ENCODE measurements at regions of chr1 and their contacts with region 1.

Region 1: DNA sequence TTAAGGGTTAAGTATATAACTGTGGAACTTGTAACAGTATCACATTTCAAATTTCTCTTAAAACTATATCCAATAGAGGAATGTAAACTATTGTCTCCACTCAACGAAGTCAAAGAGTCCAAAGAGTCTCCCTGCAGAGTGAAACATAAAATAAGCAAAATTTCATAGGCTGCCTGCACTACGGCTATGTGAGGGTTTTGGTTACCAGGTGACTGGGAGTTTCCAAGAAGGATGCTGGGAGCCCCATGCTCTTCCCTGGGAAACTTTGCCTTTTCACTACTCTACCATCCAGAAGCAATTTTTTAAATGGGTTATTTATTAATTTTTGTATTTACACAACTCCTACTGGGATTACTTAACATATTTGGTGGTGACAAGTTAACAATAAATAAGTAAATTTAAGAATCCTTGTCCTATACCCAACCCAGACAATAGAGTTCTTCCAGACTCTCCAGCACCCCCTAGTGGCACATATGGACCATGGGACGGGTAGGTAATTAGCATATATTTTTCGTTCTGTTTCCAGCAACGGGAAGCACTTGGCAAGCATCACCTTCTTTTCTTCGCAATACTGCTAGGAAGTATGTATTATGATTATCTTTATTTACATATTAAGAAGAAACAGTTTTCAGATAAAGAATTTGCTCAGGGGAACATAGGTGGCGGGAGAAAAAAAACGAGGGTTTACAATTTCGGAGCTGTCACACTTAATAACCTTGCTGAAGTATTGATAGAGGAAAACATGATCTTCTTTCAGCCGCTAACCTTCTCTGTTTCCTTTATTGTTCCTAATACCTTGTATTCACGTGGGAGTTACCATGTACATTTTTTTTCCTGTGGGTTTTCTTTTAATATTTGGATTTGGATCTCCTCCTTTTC is 3.5 kb downstream of the FMO2 start:
- DNase-seq: peak; percentile 5
- ATAC-seq: peak; percentile 94
- H3K4me3 ChIP-seq: no peak overlapping the region
- H3K27ac ChIP-seq: no peak overlapping the region
- H3K4me1 ChIP-seq: no peaks in the 10 kb centered on the region
- H3K27me3 ChIP-seq: no peaks in the 10 kb centered on the region
- CTCF ChIP-seq: peak; percentile 68 to 87 (median 81)
- EP300 ChIP-seq: no peak
- POLR2A ChIP-seq: no peak
- RAD21 ChIP-seq: peak; percentile 68

Region 2: GRCh38 chr1:170967042-170967910 is 221.4 kb before region 1 on chr1:
- CTCF ChIA-PET with region 1: interaction called, 12 read pairs
- POLR2A ChIA-PET with region 1: no interaction called
- RAD21 ChIA-PET with region 1: interaction called, 4 read pairs
- SMC1A ChIA-PET with region 1: interaction called, 8 read pairs
- in situ Hi-C with region 1: no loop called
- intact Hi-C with region 1: loop called (anchors 10 kb)
- DNase-seq: no peak
- ATAC-seq: peak; percentile 76
- H3K4me3 ChIP-seq: no peak overlapping the region
- H3K27ac ChIP-seq: no peak overlapping the region
- H3K4me1 ChIP-seq: no peaks in the 10 kb centered on the region
- H3K27me3 ChIP-seq: no peaks in the 10 kb centered on the region; a peak in 1 of 4 replicates
- CTCF ChIP-seq: peak; percentile 47 to 52 (median 49); a peak in 5 of 6 replicates
- EP300 ChIP-seq: no peak
- POLR2A ChIP-seq: no peak
- RAD21 ChIP-seq: peak; percentile 54

Region 3: GRCh38 chr1:171081314-171081753 is 107.3 kb before region 1 on chr1:
- CTCF ChIA-PET with region 1: interaction called, 14 read pairs
- POLR2A ChIA-PET with region 1: no interaction called
- RAD21 ChIA-PET with region 1: interaction called, 9 read pairs
- SMC1A ChIA-PET with region 1: interaction called, 4 read pairs
- in situ Hi-C with region 1: no loop called
- intact Hi-C with region 1: loop called (anchors 5 kb)
- DNase-seq: no peak
- ATAC-seq: peak; percentile 31; the same call in 1 of the 3 replicates
- H3K4me3 ChIP-seq: no peak overlapping the region
- H3K27ac ChIP-seq: no peak overlapping the region
- H3K4me1 ChIP-seq: no peaks in the 10 kb centered on the region
- H3K27me3 ChIP-seq: no peaks in the 10 kb centered on the region
- CTCF ChIP-seq: peak in 1 of 3 experiments; percentile 36; a peak in 2 of 6 replicates
- EP300 ChIP-seq: no peak
- POLR2A ChIP-seq: no peak
- RAD21 ChIP-seq: peak; percentile 30; the same call in 1 of the 2 replicates

Measured in GM12878 (cell line).